CD4-positive, alpha-beta T cell (primary cell): ENCODE measurements at regions of chr16 and their contacts with region 1.

Region 1: DNA sequence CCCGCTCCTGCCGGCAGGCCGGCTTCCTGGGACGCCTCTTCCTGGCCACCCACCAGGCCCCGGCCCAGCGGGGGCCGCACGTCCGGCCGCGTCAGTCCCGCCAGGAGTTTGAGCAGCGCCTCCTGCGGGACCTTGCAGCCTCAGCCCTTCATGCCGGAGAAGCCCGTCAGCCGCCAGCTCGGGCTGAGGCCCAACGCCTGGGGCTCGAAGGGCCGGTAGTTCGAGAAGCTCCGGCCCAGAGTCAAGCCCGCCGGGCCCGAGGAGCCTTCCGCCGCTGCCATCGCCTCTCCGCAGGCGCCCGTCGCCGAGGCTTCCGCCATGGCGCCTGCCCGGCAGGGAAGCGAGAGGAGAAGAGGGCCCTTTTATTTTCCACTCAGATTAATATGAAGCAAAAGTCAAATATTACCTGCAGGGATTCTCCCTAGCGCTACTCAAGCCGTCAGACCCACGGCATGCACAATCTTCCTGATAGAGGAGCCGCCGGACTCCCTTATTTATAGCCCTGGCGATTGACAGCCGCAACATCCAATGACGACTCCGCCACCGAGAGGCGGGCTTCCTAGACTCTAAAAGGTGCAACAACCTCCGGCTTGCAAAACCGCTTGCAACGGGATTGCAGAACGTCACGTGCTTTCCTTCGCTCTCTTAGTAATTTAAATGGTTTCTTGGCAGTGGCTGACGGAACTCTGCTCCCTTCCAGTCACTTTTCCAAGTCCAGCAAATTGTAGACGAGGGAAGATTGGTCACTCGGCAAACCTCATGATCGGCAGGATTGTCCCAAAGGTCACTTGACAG is at the start of gene SEPHS2:
- DNase-seq: peak; percentile 93 to 98 (median 96)
- ATAC-seq: peak; percentile 97
- H3K4me3 ChIP-seq: peak within 1 kb of the TSS; percentile 83
- H3K4me3 Mint-ChIP-seq: peak within 1 kb of the TSS; percentile 96
- H3K27ac ChIP-seq: peak within 1 kb of the TSS; percentile 76 to 88
- H3K27ac Mint-ChIP-seq: peak within 1 kb of the TSS; percentile 89
- H3K4me1 ChIP-seq: peaks cover 37% of the 10 kb centered on the region
- H3K4me1 Mint-ChIP-seq: peaks cover 44% of the 10 kb centered on the region
- H3K27me3 ChIP-seq: no peaks in the 10 kb centered on the region
- H3K27me3 Mint-ChIP-seq: no peaks in the 10 kb centered on the region
- CTCF ChIP-seq: peak; percentile 16
- total RNA-seq, gene SEPHS2: 25.4 to 25.9 TPM

Region 2: GRCh38 chr16:30458561-30459394 is 13.2 kb after region 1 on chr16:
- CTCF ChIA-PET with region 1: interaction called, 13 read pairs
- POLR2A ChIA-PET with region 1: interaction called, 19 read pairs
- intact Hi-C with region 1: no loop called
- DNase-seq: peak in 13 of 14 experiments; percentile 49 to 93 (median 71)
- ATAC-seq: peak; percentile 94
- H3K4me3 ChIP-seq: peak overlapping the region; percentile 13
- H3K4me3 Mint-ChIP-seq: peak overlapping the region; percentile 60
- H3K27ac ChIP-seq: peak overlapping the region; percentile 55 to 61
- H3K27ac Mint-ChIP-seq: peak overlapping the region; percentile 91
- H3K4me1 ChIP-seq: peaks cover 37% of the 10 kb centered on the region
- H3K4me1 Mint-ChIP-seq: peaks cover 55% of the 10 kb centered on the region
- H3K27me3 ChIP-seq: no peaks in the 10 kb centered on the region
- H3K27me3 Mint-ChIP-seq: no peaks in the 10 kb centered on the region
- CTCF ChIP-seq: no peak

Region 3: GRCh38 chr16:30482366-30482765 is 36.8 kb after region 1 on chr16:
- CTCF ChIA-PET with region 1: interaction called, 12 read pairs
- POLR2A ChIA-PET with region 1: interaction called, 5 read pairs
- intact Hi-C with region 1: no loop called
- DNase-seq: peak in 3 of 14 experiments; percentile 21 to 38 (median 23)
- ATAC-seq: peak; percentile 80
- H3K4me3 ChIP-seq: no peak overlapping the region
- H3K4me3 Mint-ChIP-seq: no peak overlapping the region
- H3K27ac ChIP-seq: no peak overlapping the region
- H3K27ac Mint-ChIP-seq: peak overlapping the region; percentile 76
- H3K4me1 ChIP-seq: peaks cover 62% of the 10 kb centered on the region
- H3K4me1 Mint-ChIP-seq: peaks cover 24% of the 10 kb centered on the region
- H3K27me3 ChIP-seq: no peaks in the 10 kb centered on the region
- H3K27me3 Mint-ChIP-seq: no peaks in the 10 kb centered on the region
- CTCF ChIP-seq: no peak

Region 4: GRCh38 chr16:30534368-30535105 is 88.9 kb after region 1 on chr16 and contains the start of gene ZNF747:
- CTCF ChIA-PET with region 1: interaction called, 10 read pairs
- POLR2A ChIA-PET with region 1: interaction called, 7 read pairs
- intact Hi-C with region 1: loop called (anchors 2 to 5 kb)
- DNase-seq: peak; percentile 88 to 95 (median 92)
- ATAC-seq: peak; percentile 80
- H3K4me3 ChIP-seq: peak within 1 kb of the TSS; percentile 87
- H3K4me3 Mint-ChIP-seq: peak within 1 kb of the TSS; percentile 94
- H3K27ac ChIP-seq: peak within 1 kb of the TSS; percentile 85 to 96
- H3K27ac Mint-ChIP-seq: peak within 1 kb of the TSS; percentile 99
- H3K4me1 ChIP-seq: peaks cover 52% of the 10 kb centered on the region
- H3K4me1 Mint-ChIP-seq: peaks cover 43% of the 10 kb centered on the region
- H3K27me3 ChIP-seq: no peaks in the 10 kb centered on the region
- H3K27me3 Mint-ChIP-seq: no peaks in the 10 kb centered on the region
- CTCF ChIP-seq: no peak
- total RNA-seq, gene ZNF747: 6.3 to 6.7 TPM

Region 5: DNA sequence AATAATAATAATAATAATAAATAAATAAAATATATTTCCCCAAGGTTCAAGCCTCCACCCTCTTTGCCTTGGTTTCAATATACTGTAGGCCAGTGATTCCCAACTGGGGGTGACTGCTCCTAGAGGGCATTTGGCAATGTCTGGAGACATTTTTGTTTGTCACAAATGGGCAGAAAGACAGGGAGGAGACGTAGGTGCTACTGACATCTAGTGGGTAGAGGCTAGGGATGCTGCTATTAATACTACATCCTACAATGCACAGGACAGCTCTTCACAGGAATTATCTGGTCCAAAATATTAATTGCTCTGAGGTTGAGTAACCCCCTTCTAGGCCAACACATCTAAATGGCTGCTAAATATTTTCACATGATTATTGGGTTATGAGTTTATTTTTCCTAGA is 192.3 kb after region 1 on chr16:
- CTCF ChIA-PET with region 1: no interaction called
- POLR2A ChIA-PET with region 1: no interaction called
- intact Hi-C with region 1: loop called in 1 of 2 experiments (anchors 5 kb)
- DNase-seq: peak in 4 of 14 experiments; percentile 19 to 75 (median 63)
- ATAC-seq: peak; percentile 17
- H3K4me3 ChIP-seq: no peak overlapping the region
- H3K4me3 Mint-ChIP-seq: peak overlapping the region; percentile 48
- H3K27ac ChIP-seq: no peak overlapping the region
- H3K27ac Mint-ChIP-seq: no peak overlapping the region
- H3K4me1 ChIP-seq: peaks cover 19% of the 10 kb centered on the region
- H3K4me1 Mint-ChIP-seq: peaks cover 17% of the 10 kb centered on the region
- H3K27me3 ChIP-seq: no peaks in the 10 kb centered on the region
- H3K27me3 Mint-ChIP-seq: no peaks in the 10 kb centered on the region
- CTCF ChIP-seq: peak; percentile 24